ENCODE measurements at regions of chr1 and their contacts with region 1.

Region 1: GRCh38 chr1:167687919-167688519 is 33.8 kb upstream of the MPZL1 start:
- DNase-seq: peak in 4 of 5 donors; percentile 81 to 93 (median 86)
- H3K4me3 ChIP-seq: no peak overlapping the region
- H3K27ac ChIP-seq: no peak overlapping the region
- H3K4me1 ChIP-seq: peaks cover 0 to 3% (median 0%) of the 10 kb centered on the region in 3 donors
- H3K27me3 ChIP-seq: no peaks in the 10 kb centered on the region
- CTCF ChIP-seq: peak; percentile 93

Region 2: GRCh38 chr1:167599957-167600581 is 88.0 kb before region 1 on chr1:
- intact Hi-C with region 1: loop called (anchors 5 kb)
- DNase-seq: peak in 2 of 5 donors; percentile 26 to 58
- H3K4me3 ChIP-seq: no peak overlapping the region
- H3K27ac ChIP-seq: no peak overlapping the region
- H3K4me1 ChIP-seq: peaks cover 0 to 13% (median 7%) of the 10 kb centered on the region in 3 donors
- H3K27me3 ChIP-seq: no peaks in the 10 kb centered on the region
- CTCF ChIP-seq: peak; percentile 41

Region 3: GRCh38 chr1:167829868-167830267 is 141.8 kb after region 1 on chr1:
- intact Hi-C with region 1: no loop called
- DNase-seq: no peak
- H3K4me3 ChIP-seq: no peak overlapping the region
- H3K27ac ChIP-seq: no peak overlapping the region
- H3K4me1 ChIP-seq: no peaks in the 10 kb centered on the region
- H3K27me3 ChIP-seq: no peaks in the 10 kb centered on the region
- CTCF ChIP-seq: no peak

Region 4: DNA sequence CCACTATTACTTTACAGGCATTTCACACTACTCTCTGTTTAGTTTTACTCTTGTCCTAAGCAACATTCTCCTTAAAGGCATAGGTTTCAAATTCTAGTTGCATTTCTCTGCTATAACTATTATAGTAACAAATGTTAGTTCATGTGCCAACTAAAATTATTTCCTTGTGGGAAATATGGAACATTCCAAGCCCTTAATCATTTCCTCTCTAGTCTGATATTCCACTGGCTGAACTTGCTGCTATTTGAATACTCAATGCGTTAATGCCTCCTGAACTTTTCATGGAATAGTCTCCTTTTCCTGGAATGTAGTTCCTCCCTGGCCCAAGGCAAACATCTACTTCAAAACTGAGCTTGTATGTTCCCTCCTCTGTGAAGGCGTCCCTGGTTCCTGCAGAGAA is 573.4 kb after region 1 on chr1:
- intact Hi-C with region 1: no loop called
- DNase-seq: peak in 1 of 5 donors; percentile 36
- H3K4me3 ChIP-seq: no peak overlapping the region
- H3K27ac ChIP-seq: no peak overlapping the region
- H3K4me1 ChIP-seq: peaks cover 0 to 8% (median 3%) of the 10 kb centered on the region in 3 donors
- H3K27me3 ChIP-seq: no peaks in the 10 kb centered on the region
- CTCF ChIP-seq: no peak